Activated CD8-positive, alpha-beta T cell treated with anti-CD3 and anti-CD28 coated beads, Interleukin-2, amount 10 ng/mL, durations not matched to agents 7 days and 5 days (primary cell): ENCODE measurements at regions of chr17 and their contacts with region 1.

Region 1: GRCh38 chr17:27353461-27354050 is 59.6 kb downstream of the WSB1 start:
- DNase-seq: peak; percentile 92
- ATAC-seq: peak; percentile 95
- H3K4me3 Mint-ChIP-seq: peak overlapping the region; percentile 81
- H3K27ac Mint-ChIP-seq: peak overlapping the region; percentile 95
- H3K4me1 Mint-ChIP-seq: peaks cover 24% of the 10 kb centered on the region
- H3K27me3 Mint-ChIP-seq: no peaks in the 10 kb centered on the region

Region 2: DNA sequence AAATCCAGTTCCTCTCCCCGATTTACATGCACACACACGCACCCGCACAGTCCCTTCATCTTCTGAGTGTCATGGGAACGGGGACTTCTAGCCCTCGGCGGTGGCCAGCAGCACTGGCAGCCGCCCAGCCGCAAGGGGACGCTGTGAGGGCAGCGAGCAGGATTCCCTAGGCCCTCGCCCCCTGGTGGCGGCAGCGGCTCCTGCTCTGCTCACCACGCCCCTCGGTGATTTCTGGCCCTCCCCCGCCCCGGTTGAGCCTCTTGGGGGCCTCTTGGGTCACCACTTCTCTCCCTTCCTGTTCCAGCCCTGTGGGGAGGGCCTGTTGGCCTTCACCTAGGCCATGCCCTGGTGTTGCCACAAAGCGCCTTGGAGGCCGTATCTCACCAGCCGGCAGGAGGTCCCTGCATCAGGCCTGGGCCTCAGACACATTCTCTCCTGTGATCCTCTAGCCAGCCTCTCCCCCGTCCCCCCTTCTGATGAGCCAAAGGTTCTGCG is 27.5 kb after region 1 on chr17:
- CTCF ChIA-PET with region 1: interaction called, 13 read pairs
- POLR2A ChIA-PET with region 1: no interaction called
- DNase-seq: peak; percentile 83
- ATAC-seq: peak; percentile 91
- H3K4me3 Mint-ChIP-seq: no peak overlapping the region
- H3K27ac Mint-ChIP-seq: no peak overlapping the region
- H3K4me1 Mint-ChIP-seq: peaks cover 7% of the 10 kb centered on the region
- H3K27me3 Mint-ChIP-seq: peaks cover 22% of the 10 kb centered on the region